WTC11 (cell line): ENCODE measurements at regions of chr20 and their contacts with region 1.

Region 1: DNA sequence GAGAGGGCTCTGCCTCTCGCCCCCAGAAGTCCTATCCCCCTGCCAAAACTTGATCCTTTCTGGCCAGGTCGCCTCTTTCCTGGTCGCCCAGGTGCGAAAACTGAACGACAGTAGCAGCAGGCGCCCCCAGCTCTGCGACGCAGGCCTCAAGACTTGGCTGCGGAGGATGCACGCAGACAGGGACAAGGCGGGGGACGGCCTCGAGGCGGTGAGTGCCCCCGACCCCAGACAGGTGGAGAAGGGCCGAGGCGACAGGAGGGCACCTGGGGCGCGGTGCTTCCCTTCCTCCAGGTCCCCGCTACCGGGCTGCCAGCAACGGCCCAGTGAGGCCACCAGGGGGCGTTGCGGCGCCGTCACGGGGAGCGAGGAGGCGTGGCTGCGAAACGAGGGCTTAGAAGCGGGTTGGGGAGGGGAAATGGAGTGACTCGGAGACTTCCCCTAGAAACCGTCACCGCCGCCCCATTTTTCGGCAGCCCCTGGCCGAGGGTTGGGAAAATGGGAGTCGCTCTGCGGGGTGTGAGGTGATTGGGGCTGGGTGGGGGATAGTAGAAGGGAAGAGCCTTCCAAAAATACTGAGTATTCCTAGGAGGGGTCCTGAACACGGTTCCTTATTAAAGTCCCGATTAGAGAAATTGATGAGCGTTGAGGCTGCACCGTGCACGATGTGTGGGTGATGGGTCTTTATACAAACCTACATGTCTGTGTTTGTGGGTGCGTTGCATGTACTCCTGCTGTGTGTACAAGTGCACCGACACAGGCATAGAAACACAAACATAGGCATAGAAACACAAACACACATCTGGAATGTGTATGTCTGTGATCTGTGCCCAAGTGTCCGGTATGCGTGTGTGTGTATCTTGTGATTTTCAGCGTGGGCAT is 44.6 kb downstream of the ARHGAP40 start:
- DNase-seq: peak; percentile 91
- ATAC-seq: peak; percentile 83
- H3K4me3 Mint-ChIP-seq: peak overlapping the region; percentile 71
- H3K27ac Mint-ChIP-seq: no peak overlapping the region
- H3K4me1 Mint-ChIP-seq: peaks cover 17% of the 10 kb centered on the region
- H3K27me3 Mint-ChIP-seq: peaks cover 6% of the 10 kb centered on the region; the same call in 1 of the 2 replicates
- CTCF ChIP-seq: peak; percentile 91

Region 2: GRCh38 chr20:38599410-38599938 is 46.7 kb before region 1 on chr20:
- CTCF ChIA-PET with region 1: no interaction called
- POLR2A ChIA-PET with region 1: no interaction called
- DNase-seq: no peak
- ATAC-seq: peak; percentile 21; the same call in 1 of the 2 replicates
- H3K4me3 Mint-ChIP-seq: no peak overlapping the region
- H3K27ac Mint-ChIP-seq: no peak overlapping the region
- H3K4me1 Mint-ChIP-seq: peaks cover 20% of the 10 kb centered on the region
- H3K27me3 Mint-ChIP-seq: peaks cover 32% of the 10 kb centered on the region
- CTCF ChIP-seq: no peak

Region 3: GRCh38 chr20:38633577-38634093 is 12.6 kb before region 1 on chr20:
- CTCF ChIA-PET with region 1: interaction called, 14 read pairs
- POLR2A ChIA-PET with region 1: no interaction called
- DNase-seq: peak; percentile 79
- ATAC-seq: peak; percentile 91
- H3K4me3 Mint-ChIP-seq: no peak overlapping the region
- H3K27ac Mint-ChIP-seq: no peak overlapping the region
- H3K4me1 Mint-ChIP-seq: peaks cover 22% of the 10 kb centered on the region
- H3K27me3 Mint-ChIP-seq: peaks cover 11% of the 10 kb centered on the region
- CTCF ChIP-seq: peak; percentile 81

Region 4: GRCh38 chr20:38674092-38674764 is 28.0 kb after region 1 on chr20:
- CTCF ChIA-PET with region 1: interaction called, 16 read pairs
- POLR2A ChIA-PET with region 1: no interaction called
- DNase-seq: peak; percentile 83
- ATAC-seq: peak; percentile 88
- H3K4me3 Mint-ChIP-seq: peak overlapping the region; percentile 87
- H3K27ac Mint-ChIP-seq: no peak overlapping the region
- H3K4me1 Mint-ChIP-seq: peaks cover 42% of the 10 kb centered on the region
- H3K27me3 Mint-ChIP-seq: peaks cover 80% of the 10 kb centered on the region
- CTCF ChIP-seq: no peak

Region 5: DNA sequence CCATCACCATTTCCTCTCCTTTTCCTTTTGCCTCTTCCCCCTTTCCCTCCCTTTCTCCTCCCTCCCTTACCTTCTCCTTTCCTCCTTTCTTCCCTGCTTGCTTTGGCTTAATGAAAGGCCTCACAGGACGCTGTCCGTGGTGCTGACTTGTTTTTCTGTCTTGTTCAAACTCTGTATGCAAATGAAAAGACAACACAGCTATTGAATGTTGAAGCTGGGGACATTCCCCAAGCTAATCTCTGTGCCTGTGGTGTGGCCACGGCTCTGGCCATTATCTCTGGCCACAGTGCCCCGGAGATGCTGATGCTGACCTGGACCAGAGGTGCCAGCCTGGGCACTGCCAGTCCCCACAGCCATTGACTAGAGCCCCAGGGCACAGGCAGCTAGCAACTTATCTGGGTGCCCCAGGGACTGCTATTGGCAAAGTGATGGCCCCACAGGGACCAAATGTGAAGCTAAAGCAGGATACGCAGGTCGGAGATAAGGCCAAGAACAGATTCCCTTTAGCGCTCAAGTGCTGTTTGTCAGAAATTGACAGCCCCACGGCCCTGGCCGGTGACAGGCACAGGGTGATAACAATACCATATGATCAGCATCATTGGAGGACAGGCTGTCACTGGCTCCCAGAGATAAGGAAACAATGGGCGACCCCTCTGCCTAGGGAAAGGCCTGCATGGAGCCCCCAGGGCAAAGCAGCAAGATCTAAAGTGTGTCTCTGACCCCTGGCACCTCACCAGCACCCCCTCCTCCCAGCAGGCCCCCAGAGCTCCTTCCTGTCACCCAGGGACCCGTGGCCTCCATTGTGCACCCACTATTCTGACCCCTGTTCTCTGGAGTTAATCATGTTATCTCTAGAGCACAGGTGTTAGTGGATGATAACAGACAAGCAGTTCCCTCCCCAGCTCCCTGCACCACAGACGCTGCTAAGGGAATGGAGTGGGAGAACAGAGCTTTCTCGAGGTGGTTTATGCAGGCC is 46.5 kb after region 1 on chr20:
- CTCF ChIA-PET with region 1: interaction called, 10 read pairs
- POLR2A ChIA-PET with region 1: no interaction called
- DNase-seq: peak; percentile 93
- ATAC-seq: peak; percentile 87
- H3K4me3 Mint-ChIP-seq: no peak overlapping the region
- H3K27ac Mint-ChIP-seq: no peak overlapping the region
- H3K4me1 Mint-ChIP-seq: peaks cover 3% of the 10 kb centered on the region
- H3K27me3 Mint-ChIP-seq: peaks cover 43% of the 10 kb centered on the region
- CTCF ChIP-seq: no peak